Thyroid gland (tissue), 4 donors: ENCODE measurements at regions of chr11 and their contacts with region 1.

Region 1: GRCh38 chr11:116276051-116277044 is 496.4 kb downstream of the BUD13 start:
- DNase-seq: peak; percentile 63 to 76
- H3K4me3 ChIP-seq: no peak overlapping the region
- H3K27ac ChIP-seq: no peak overlapping the region
- H3K4me1 ChIP-seq: peaks cover 0 to 8% of the 10 kb centered on the region in 2 donors
- H3K27me3 ChIP-seq: no peaks in the 10 kb centered on the region
- CTCF ChIP-seq: peak; percentile 85 to 99 (median 92)
- POLR2A ChIP-seq: no peak

Region 2: DNA sequence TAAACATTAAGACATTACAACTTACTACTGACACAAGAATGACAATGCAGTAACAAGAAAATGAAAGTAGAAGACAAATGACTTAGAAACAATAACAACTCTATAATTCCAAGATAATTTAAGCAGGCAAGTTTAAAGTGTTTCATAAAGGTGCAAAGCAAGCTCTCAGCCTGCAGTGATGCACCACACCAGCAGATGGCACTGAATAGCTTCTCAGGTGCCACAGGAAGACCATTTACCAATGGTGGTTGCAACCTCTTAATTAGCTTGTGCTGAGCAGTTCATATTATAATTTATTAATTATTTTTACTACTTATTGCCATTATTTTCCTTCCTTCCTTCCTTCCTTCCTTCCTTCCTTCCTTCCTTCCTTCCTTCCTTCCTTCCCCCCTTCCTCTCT is 1537.4 kb before region 1 on chr11:
- intact Hi-C with region 1: loop called (anchors 10 kb)
- DNase-seq: peak; percentile 55 to 56
- H3K4me3 ChIP-seq: no peak overlapping the region
- H3K27ac ChIP-seq: no peak overlapping the region
- H3K4me1 ChIP-seq: peaks cover 0 to 1% of the 10 kb centered on the region in 2 donors
- H3K27me3 ChIP-seq: no peaks in the 10 kb centered on the region
- CTCF ChIP-seq: peak; percentile 38 to 84 (median 74)
- POLR2A ChIP-seq: no peak

Region 3: GRCh38 chr11:115324581-115325432 is 951.5 kb before region 1 on chr11:
- intact Hi-C with region 1: loop called (anchors 10 kb)
- DNase-seq: peak; percentile 29 to 40
- H3K4me3 ChIP-seq: no peak overlapping the region
- H3K27ac ChIP-seq: peak overlapping the region in 2 of 3 donors; percentile 51 to 63
- H3K4me1 ChIP-seq: peaks cover 16 to 22% of the 10 kb centered on the region in 2 donors
- H3K27me3 ChIP-seq: no peaks in the 10 kb centered on the region
- CTCF ChIP-seq: peak; percentile 34 to 87 (median 82)
- POLR2A ChIP-seq: no peak